CD8-positive, alpha-beta T cell (primary cell): ENCODE measurements at regions of chr14 and their contacts with region 1.

Region 1: GRCh38 chr14:74762917-74763802 is at the start of gene YLPM1:
- DNase-seq: peak; percentile 88 to 98 (median 91)
- ATAC-seq: peak; percentile 93
- H3K4me3 ChIP-seq: peak within 1 kb of the TSS; percentile 90 to 95
- H3K4me3 Mint-ChIP-seq: peak within 1 kb of the TSS; percentile 86
- H3K27ac ChIP-seq: peak within 1 kb of the TSS; percentile 68 to 98
- H3K27ac Mint-ChIP-seq: peak within 1 kb of the TSS; percentile 93
- H3K4me1 ChIP-seq: peaks cover 43% of the 10 kb centered on the region
- H3K4me1 Mint-ChIP-seq: peaks cover 51% of the 10 kb centered on the region
- H3K27me3 ChIP-seq: no peaks in the 10 kb centered on the region
- H3K27me3 Mint-ChIP-seq: no peaks in the 10 kb centered on the region
- CTCF ChIP-seq: peak; percentile 41
- total RNA-seq, gene YLPM1: 77.3 to 78.8 TPM

Region 2: GRCh38 chr14:73058224-73058921 is 1704.8 kb before region 1 on chr14 and contains the start of gene RBM25:
- CTCF ChIA-PET with region 1: no interaction called
- POLR2A ChIA-PET with region 1: no interaction called
- intact Hi-C with region 1: loop called in 1 of 2 experiments (anchors 10 kb)
- DNase-seq: peak; percentile 89 to 98 (median 94)
- ATAC-seq: peak; percentile 95
- H3K4me3 ChIP-seq: peak within 1 kb of the TSS; percentile 78 to 99
- H3K4me3 Mint-ChIP-seq: no peak within 1 kb of the TSS
- H3K27ac ChIP-seq: peak within 1 kb of the TSS; percentile 81 to 94
- H3K27ac Mint-ChIP-seq: no peak within 1 kb of the TSS
- H3K4me1 ChIP-seq: peaks cover 44% of the 10 kb centered on the region
- H3K4me1 Mint-ChIP-seq: peaks cover 40% of the 10 kb centered on the region
- H3K27me3 ChIP-seq: no peaks in the 10 kb centered on the region
- H3K27me3 Mint-ChIP-seq: no peaks in the 10 kb centered on the region
- CTCF ChIP-seq: no peak
- total RNA-seq, gene RBM25: 166 to 178 TPM

Region 3: DNA sequence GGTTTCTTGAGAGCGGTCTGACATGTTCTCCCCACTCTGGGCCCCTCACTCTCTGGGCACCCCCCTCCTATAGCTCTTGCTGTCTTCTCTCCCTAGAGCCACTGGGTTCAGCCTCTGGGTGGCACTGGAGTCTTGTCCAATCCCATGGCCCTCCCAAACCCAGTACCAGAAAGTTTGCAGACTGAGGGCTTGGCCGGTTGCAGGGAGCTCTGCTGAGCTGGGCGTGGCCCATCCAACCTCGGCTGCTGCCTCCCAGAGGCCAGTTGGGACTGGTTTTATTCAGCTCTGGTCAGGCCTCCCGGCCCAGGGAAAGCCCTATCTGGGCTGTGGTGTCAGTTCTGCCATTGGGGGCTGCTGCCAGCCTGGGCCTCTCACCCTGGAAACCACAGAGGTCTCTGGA is 231.7 kb before region 1 on chr14:
- CTCF ChIA-PET with region 1: no interaction called
- POLR2A ChIA-PET with region 1: no interaction called
- intact Hi-C with region 1: no loop called
- DNase-seq: no peak
- ATAC-seq: no peak
- H3K4me3 ChIP-seq: no peak overlapping the region
- H3K4me3 Mint-ChIP-seq: no peak overlapping the region
- H3K27ac ChIP-seq: no peak overlapping the region
- H3K27ac Mint-ChIP-seq: no peak overlapping the region
- H3K4me1 ChIP-seq: no peaks in the 10 kb centered on the region
- H3K4me1 Mint-ChIP-seq: peaks cover 3% of the 10 kb centered on the region
- H3K27me3 ChIP-seq: no peaks in the 10 kb centered on the region
- H3K27me3 Mint-ChIP-seq: no peaks in the 10 kb centered on the region
- CTCF ChIP-seq: no peak

Region 4: GRCh38 chr14:74618078-74618952 is 144.8 kb before region 1 on chr14:
- CTCF ChIA-PET with region 1: interaction called, 3 read pairs
- POLR2A ChIA-PET with region 1: interaction called, 18 read pairs
- intact Hi-C with region 1: loop called in 1 of 2 experiments (anchors 2 kb)
- DNase-seq: peak; percentile 46 to 95 (median 78)
- ATAC-seq: peak; percentile 83
- H3K4me3 ChIP-seq: peak overlapping the region; percentile 23 to 52
- H3K4me3 Mint-ChIP-seq: peak overlapping the region; percentile 73
- H3K27ac ChIP-seq: peak overlapping the region; percentile 57 to 72
- H3K27ac Mint-ChIP-seq: peak overlapping the region; percentile 93
- H3K4me1 ChIP-seq: peaks cover 50% of the 10 kb centered on the region
- H3K4me1 Mint-ChIP-seq: peaks cover 60% of the 10 kb centered on the region
- H3K27me3 ChIP-seq: no peaks in the 10 kb centered on the region
- H3K27me3 Mint-ChIP-seq: no peaks in the 10 kb centered on the region
- CTCF ChIP-seq: no peak

Region 5: GRCh38 chr14:74784634-74785033 is 21.5 kb after region 1 on chr14:
- CTCF ChIA-PET with region 1: interaction called, 5 read pairs
- POLR2A ChIA-PET with region 1: interaction called, 11 read pairs
- intact Hi-C with region 1: no loop called
- DNase-seq: peak in 1 of 9 experiments; percentile 47
- ATAC-seq: peak; percentile 92
- H3K4me3 ChIP-seq: no peak overlapping the region
- H3K4me3 Mint-ChIP-seq: no peak overlapping the region
- H3K27ac ChIP-seq: peak overlapping the region in 1 of 2 experiments; percentile 2
- H3K27ac Mint-ChIP-seq: peak overlapping the region; percentile 58
- H3K4me1 ChIP-seq: peaks cover 18% of the 10 kb centered on the region
- H3K4me1 Mint-ChIP-seq: peaks cover 34% of the 10 kb centered on the region
- H3K27me3 ChIP-seq: no peaks in the 10 kb centered on the region
- H3K27me3 Mint-ChIP-seq: no peaks in the 10 kb centered on the region
- CTCF ChIP-seq: no peak

Region 6: DNA sequence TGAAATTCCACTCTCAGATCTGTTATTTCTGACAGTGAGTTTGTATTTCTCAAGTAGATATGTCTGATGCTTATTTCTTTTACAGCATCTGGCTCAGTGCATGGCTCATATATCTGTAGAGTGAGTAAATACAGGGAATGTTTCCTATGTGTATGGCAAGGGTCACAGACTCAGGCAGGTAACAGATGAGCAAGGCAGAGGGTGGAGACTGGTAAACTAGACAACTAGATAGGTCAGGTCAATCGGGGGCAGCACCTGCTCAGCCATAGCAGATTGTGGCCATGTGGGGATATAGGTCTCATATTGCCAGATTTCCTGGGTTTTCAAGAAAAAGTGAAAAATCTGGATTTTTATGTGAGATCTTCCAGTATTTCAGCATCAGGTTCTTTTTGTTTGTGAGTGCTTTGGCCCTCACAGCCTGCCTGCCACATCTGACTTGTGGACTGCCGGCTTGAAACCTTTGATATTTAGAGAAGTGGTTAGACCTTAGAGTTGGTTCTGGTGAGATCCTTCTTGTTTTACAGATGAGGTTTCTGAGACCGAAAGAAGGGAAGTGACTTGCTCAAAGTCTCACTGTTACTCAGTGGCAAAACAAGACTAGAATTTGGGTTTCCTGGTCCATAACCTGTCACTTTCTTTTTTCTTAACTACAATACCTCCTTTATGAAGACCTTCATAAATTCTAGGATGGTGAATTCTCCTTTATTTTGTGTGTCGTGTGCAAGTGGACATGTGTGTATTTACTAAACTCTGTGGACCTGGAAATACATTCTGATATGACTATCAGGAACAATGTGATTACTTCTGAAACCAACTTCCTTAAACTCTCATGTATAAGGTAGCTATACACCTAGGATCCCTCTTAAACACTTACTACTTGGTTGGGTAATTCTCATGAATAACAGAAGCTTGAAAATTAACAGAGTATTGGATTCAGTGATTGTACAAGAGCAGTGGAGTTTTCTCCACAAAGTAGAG is 78.4 kb after region 1 on chr14:
- CTCF ChIA-PET with region 1: no interaction called
- POLR2A ChIA-PET with region 1: interaction called, 8 read pairs
- intact Hi-C with region 1: loop called in 1 of 2 experiments (anchors 5 kb)
- DNase-seq: peak in 2 of 9 experiments; percentile 17 to 56
- ATAC-seq: peak; percentile 33
- H3K4me3 ChIP-seq: no peak overlapping the region
- H3K4me3 Mint-ChIP-seq: no peak overlapping the region
- H3K27ac ChIP-seq: peak overlapping the region in 1 of 2 experiments; percentile 71
- H3K27ac Mint-ChIP-seq: peak overlapping the region; percentile 82
- H3K4me1 ChIP-seq: peaks cover 54% of the 10 kb centered on the region
- H3K4me1 Mint-ChIP-seq: peaks cover 65% of the 10 kb centered on the region
- H3K27me3 ChIP-seq: no peaks in the 10 kb centered on the region
- H3K27me3 Mint-ChIP-seq: no peaks in the 10 kb centered on the region
- CTCF ChIP-seq: no peak

Region 7: DNA sequence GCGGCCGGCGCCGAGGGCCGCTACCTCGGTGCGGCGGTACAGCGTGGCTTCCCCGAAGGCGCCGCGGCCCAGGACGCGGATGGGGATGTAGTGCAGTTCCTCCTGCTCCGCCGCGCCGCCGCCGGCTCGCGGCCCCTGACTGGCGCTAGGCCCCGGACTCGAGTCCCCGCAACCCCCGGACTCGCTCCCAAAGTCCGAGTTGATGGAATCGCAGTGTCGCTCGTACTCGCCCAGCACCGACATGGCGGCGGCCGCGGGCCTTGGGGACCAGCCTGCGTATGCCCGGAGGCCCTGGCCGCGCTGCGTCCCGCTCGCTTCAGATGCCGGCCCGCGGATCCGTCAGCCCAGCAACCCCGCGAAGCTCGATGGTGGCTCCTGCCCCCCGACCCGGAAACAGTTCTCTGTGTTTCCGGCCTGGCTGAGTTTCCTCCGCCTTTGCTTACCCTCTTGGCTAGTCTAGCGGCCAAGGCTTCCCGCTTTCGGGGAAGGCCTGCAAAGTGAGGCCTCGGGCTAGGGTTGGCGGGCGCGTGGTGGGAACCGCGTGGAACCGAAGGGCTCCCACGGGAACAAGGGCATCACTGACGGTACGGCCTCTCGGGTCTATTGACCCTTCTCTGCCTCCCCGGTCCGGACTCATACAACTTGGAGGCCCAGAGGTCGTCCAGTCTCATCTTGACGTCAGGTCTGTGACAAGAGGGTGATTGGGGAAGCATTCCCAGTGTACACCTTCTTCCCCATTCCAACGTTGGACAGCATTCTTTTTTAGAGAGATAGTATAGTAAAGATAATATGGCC is 363.7 kb after region 1 on chr14 and contains the start of gene NEK9:
- CTCF ChIA-PET with region 1: no interaction called
- POLR2A ChIA-PET with region 1: no interaction called
- intact Hi-C with region 1: loop called in 1 of 2 experiments (anchors 10 kb)
- DNase-seq: peak; percentile 77 to 93 (median 89)
- ATAC-seq: peak; percentile 82
- H3K4me3 ChIP-seq: peak within 1 kb of the TSS; percentile 87 to 95
- H3K4me3 Mint-ChIP-seq: peak within 1 kb of the TSS; percentile 95
- H3K27ac ChIP-seq: peak within 1 kb of the TSS; percentile 87 to 92
- H3K27ac Mint-ChIP-seq: peak within 1 kb of the TSS; percentile 98
- H3K4me1 ChIP-seq: peaks cover 23% of the 10 kb centered on the region
- H3K4me1 Mint-ChIP-seq: peaks cover 46% of the 10 kb centered on the region
- H3K27me3 ChIP-seq: no peaks in the 10 kb centered on the region
- H3K27me3 Mint-ChIP-seq: no peaks in the 10 kb centered on the region
- CTCF ChIP-seq: no peak
- total RNA-seq, gene NEK9: 40.7 to 42.9 TPM

Region 8: DNA sequence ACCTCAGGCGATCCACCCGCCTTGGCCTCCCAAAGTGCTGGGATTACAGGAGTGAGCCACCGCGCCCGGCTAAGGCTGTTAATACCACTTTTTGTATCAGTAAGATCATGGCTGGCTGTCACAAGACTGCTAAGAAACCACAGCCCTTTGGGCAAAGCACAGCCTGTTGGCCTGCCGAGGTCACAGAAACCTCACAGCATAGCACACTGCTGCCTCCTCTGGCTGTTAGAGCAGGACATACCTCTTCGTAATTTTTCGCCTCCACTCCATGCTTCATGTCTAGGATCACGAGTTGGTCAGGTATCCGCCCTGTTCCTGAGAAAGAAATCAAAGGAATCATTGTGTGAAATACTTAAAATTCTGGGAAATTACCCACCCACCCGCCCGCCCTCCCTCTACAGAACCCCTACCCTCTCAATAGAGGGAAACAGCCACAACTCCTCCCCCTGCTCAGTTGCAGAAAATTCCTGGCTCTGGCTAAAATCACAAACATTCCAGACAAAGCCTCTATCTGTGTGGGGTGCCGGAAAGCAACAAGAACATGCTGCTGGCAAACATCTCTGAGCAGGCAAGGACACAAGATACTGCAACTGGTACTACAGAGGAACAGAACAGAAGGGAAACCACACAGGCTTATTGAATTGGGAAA is 384.4 kb after region 1 on chr14:
- CTCF ChIA-PET with region 1: no interaction called
- POLR2A ChIA-PET with region 1: no interaction called
- intact Hi-C with region 1: no loop called
- DNase-seq: peak in 3 of 9 experiments; percentile 41 to 62 (median 53)
- ATAC-seq: no peak
- H3K4me3 ChIP-seq: no peak overlapping the region
- H3K4me3 Mint-ChIP-seq: no peak overlapping the region
- H3K27ac ChIP-seq: no peak overlapping the region
- H3K27ac Mint-ChIP-seq: no peak overlapping the region
- H3K4me1 ChIP-seq: peaks cover 30% of the 10 kb centered on the region
- H3K4me1 Mint-ChIP-seq: peaks cover 61% of the 10 kb centered on the region
- H3K27me3 ChIP-seq: no peaks in the 10 kb centered on the region
- H3K27me3 Mint-ChIP-seq: no peaks in the 10 kb centered on the region
- CTCF ChIP-seq: no peak